CD8-positive, alpha-beta memory T cell (primary cell): ENCODE measurements at regions of chr12 and their contacts with region 1.

Region 1: GRCh38 chr12:6937481-6938297 is 5.9 kb upstream of the RNU7-1 start:
- DNase-seq: peak; percentile 90 to 96 (median 93)
- H3K4me3 ChIP-seq: peak overlapping the region; percentile 86
- H3K4me3 Mint-ChIP-seq: peak overlapping the region; percentile 82 to 91 (median 85)
- H3K27ac ChIP-seq: peak overlapping the region; percentile 87
- H3K27ac Mint-ChIP-seq: peak overlapping the region; percentile 92 to 98 (median 94)
- H3K4me1 ChIP-seq: peaks cover 34% of the 10 kb centered on the region
- H3K4me1 Mint-ChIP-seq: peaks cover 27 to 49% (median 35%) of the 10 kb centered on the region in 3 donors
- H3K27me3 ChIP-seq: no peaks in the 10 kb centered on the region
- H3K27me3 Mint-ChIP-seq: peaks cover 0 to 1% of the 10 kb centered on the region in 2 donors

Region 2: DNA sequence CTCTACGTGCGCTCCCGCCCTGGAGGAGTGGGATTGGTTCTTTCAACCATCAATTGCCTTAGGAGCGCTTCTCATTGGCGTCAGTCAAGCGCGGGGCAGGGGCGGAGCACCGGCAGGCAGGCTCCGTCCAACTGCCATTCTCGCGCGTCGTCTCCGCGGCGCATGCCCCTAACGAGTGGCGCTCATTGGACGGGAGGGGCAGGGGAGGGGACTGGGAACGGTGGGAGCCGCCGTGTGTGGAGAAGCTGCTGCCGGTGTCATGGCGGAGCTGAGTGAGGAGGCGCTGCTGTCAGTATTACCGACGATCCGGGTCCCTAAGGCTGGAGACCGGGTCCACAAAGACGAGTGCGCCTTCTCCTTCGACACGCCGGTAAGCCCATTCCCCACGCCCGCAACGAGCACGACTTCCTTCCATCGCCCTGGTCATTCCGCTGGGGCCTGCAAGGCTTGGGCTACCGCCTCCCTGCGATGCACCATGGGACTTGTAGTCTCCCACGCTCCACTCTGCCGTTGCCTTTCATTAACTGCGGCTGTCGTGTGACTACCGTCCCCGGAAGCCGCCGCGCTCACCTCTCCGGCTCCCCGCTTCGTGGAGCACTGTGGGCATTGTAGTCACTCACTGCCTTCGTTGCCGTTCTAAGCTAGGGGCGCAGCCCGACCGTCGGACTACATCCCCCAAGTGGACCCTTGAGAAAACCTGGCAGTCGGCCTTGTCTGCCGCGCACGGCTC is 85.6 kb before region 1 on chr12 and contains the start of gene USP5:
- CTCF ChIA-PET with region 1: interaction called, 4 read pairs
- POLR2A ChIA-PET with region 1: interaction called, 10 read pairs
- DNase-seq: peak; percentile 97 to 99 (median 99)
- H3K4me3 ChIP-seq: peak within 1 kb of the TSS; percentile 97
- H3K4me3 Mint-ChIP-seq: peak within 1 kb of the TSS; percentile 86 to 99 (median 94)
- H3K27ac ChIP-seq: peak within 1 kb of the TSS; percentile 77
- H3K27ac Mint-ChIP-seq: peak within 1 kb of the TSS; percentile 99 to 100 (median 100)
- H3K4me1 ChIP-seq: peaks cover 18% of the 10 kb centered on the region
- H3K4me1 Mint-ChIP-seq: peaks cover 20 to 38% (median 20%) of the 10 kb centered on the region in 3 donors
- H3K27me3 ChIP-seq: no peaks in the 10 kb centered on the region
- H3K27me3 Mint-ChIP-seq: no peaks in the 10 kb centered on the region
- total RNA-seq, gene USP5: 154 TPM

Region 3: GRCh38 chr12:6914246-6914946 is 23.3 kb before region 1 on chr12 and contains the start of gene ENO2:
- CTCF ChIA-PET with region 1: interaction called, 25 read pairs
- POLR2A ChIA-PET with region 1: interaction called, 14 read pairs
- DNase-seq: peak; percentile 79 to 94 (median 87)
- H3K4me3 ChIP-seq: peak within 1 kb of the TSS; percentile 69
- H3K4me3 Mint-ChIP-seq: peak within 1 kb of the TSS; percentile 89 to 99 (median 94)
- H3K27ac ChIP-seq: peak within 1 kb of the TSS; percentile 66
- H3K27ac Mint-ChIP-seq: peak within 1 kb of the TSS; percentile 94 to 99 (median 96)
- H3K4me1 ChIP-seq: peaks cover 21% of the 10 kb centered on the region
- H3K4me1 Mint-ChIP-seq: peaks cover 21 to 44% (median 30%) of the 10 kb centered on the region in 3 donors
- H3K27me3 ChIP-seq: no peaks in the 10 kb centered on the region
- H3K27me3 Mint-ChIP-seq: no peaks in the 10 kb centered on the region
- total RNA-seq, gene ENO2: 125 to 131 TPM

Region 4: GRCh38 chr12:6953442-6954315 is 16.0 kb after region 1 on chr12:
- CTCF ChIA-PET with region 1: interaction called, 815 read pairs
- POLR2A ChIA-PET with region 1: interaction called, 481 read pairs
- DNase-seq: peak; percentile 79 to 92 (median 80)
- H3K4me3 ChIP-seq: peak overlapping the region; percentile 88
- H3K4me3 Mint-ChIP-seq: peak overlapping the region; percentile 95 to 99 (median 99)
- H3K27ac ChIP-seq: peak overlapping the region; percentile 68
- H3K27ac Mint-ChIP-seq: peak overlapping the region; percentile 94 to 99 (median 97)
- H3K4me1 ChIP-seq: peaks cover 76% of the 10 kb centered on the region
- H3K4me1 Mint-ChIP-seq: peaks cover 79 to 89% (median 81%) of the 10 kb centered on the region in 3 donors
- H3K27me3 ChIP-seq: no peaks in the 10 kb centered on the region
- H3K27me3 Mint-ChIP-seq: no peaks in the 10 kb centered on the region

Region 5: DNA sequence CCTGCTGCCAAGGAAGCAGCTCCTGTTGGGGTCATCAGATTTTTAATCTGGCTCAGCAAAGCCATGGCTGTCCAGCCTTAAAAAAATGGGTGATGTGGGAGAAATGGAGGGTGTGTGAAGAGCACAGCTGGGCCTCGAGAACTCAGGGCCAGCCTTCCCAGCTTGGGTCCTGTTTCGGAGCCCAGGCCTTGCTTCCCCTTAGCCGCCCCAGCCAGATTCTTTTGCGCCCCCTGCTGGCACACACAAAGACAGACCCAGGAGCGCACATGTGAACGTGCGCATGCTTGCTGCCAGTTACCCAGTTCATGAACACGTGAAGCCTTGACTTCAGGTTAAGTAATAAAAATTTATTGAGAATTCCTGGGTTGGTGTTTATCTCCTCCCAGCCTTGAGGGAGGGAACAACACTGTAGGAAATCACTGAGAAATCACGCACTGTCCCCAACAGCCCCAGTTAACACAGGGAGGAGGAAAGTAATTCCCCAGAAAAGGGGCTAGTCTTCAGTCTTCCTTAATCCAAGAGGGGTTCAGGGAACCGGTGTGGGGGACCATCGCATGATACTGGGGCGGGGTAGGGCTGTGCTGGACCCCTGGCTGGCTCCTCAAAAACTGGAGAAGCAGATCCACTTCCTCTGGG is 27.5 kb after region 1 on chr12:
- CTCF ChIA-PET with region 1: interaction called, 815 read pairs
- POLR2A ChIA-PET with region 1: interaction called, 481 read pairs
- DNase-seq: peak; percentile 79 to 90 (median 84)
- H3K4me3 ChIP-seq: no peak overlapping the region
- H3K4me3 Mint-ChIP-seq: peak overlapping the region in 2 of 7 donors; percentile 38 to 84
- H3K27ac ChIP-seq: no peak overlapping the region
- H3K27ac Mint-ChIP-seq: peak overlapping the region; percentile 85 to 98 (median 90)
- H3K4me1 ChIP-seq: peaks cover 59% of the 10 kb centered on the region
- H3K4me1 Mint-ChIP-seq: peaks cover 43 to 60% (median 59%) of the 10 kb centered on the region in 3 donors
- H3K27me3 ChIP-seq: no peaks in the 10 kb centered on the region
- H3K27me3 Mint-ChIP-seq: no peaks in the 10 kb centered on the region

Region 6: DNA sequence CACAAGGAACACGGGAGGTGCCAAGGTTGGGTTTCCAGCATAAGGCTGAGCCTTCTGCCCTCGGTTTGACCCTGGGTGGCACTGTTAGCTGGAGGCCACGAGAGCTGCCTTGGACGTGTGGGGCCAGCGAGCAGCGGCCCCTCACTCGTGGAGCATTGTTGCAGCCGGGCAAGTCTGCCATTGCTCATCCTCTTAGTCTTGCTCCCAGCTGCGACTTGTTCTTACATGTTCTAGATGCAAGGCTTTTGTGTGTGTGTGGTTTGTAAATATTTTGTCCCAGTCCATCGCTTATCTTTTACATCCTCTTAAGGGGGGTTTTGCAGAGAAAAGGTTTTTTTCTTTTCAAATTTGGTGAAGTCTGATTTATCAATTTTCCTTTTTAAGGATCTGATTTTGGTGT is 101.7 kb after region 1 on chr12:
- CTCF ChIA-PET with region 1: no interaction called
- POLR2A ChIA-PET with region 1: no interaction called
- DNase-seq: no peak
- H3K4me3 ChIP-seq: no peak overlapping the region
- H3K4me3 Mint-ChIP-seq: no peak overlapping the region
- H3K27ac ChIP-seq: no peak overlapping the region
- H3K27ac Mint-ChIP-seq: no peak overlapping the region
- H3K4me1 ChIP-seq: no peaks in the 10 kb centered on the region
- H3K4me1 Mint-ChIP-seq: peaks cover 0 to 6% (median 6%) of the 10 kb centered on the region in 3 donors
- H3K27me3 ChIP-seq: no peaks in the 10 kb centered on the region
- H3K27me3 Mint-ChIP-seq: no peaks in the 10 kb centered on the region

Region 7: GRCh38 chr12:7127916-7128626 is 190.4 kb after region 1 on chr12:
- CTCF ChIA-PET with region 1: no interaction called
- POLR2A ChIA-PET with region 1: no interaction called
- DNase-seq: no peak
- H3K4me3 ChIP-seq: no peak overlapping the region
- H3K4me3 Mint-ChIP-seq: peak overlapping the region; percentile 78 to 98 (median 96)
- H3K27ac ChIP-seq: peak overlapping the region; percentile 69
- H3K27ac Mint-ChIP-seq: peak overlapping the region in 6 of 8 donors; percentile 4 to 96 (median 36)
- H3K4me1 ChIP-seq: peaks cover 17% of the 10 kb centered on the region
- H3K4me1 Mint-ChIP-seq: peaks cover 30 to 41% (median 35%) of the 10 kb centered on the region in 3 donors
- H3K27me3 ChIP-seq: no peaks in the 10 kb centered on the region
- H3K27me3 Mint-ChIP-seq: no peaks in the 10 kb centered on the region